HCT116 (cell line): ENCODE measurements at regions of chr5 and their contacts with region 1.

Region 1: DNA sequence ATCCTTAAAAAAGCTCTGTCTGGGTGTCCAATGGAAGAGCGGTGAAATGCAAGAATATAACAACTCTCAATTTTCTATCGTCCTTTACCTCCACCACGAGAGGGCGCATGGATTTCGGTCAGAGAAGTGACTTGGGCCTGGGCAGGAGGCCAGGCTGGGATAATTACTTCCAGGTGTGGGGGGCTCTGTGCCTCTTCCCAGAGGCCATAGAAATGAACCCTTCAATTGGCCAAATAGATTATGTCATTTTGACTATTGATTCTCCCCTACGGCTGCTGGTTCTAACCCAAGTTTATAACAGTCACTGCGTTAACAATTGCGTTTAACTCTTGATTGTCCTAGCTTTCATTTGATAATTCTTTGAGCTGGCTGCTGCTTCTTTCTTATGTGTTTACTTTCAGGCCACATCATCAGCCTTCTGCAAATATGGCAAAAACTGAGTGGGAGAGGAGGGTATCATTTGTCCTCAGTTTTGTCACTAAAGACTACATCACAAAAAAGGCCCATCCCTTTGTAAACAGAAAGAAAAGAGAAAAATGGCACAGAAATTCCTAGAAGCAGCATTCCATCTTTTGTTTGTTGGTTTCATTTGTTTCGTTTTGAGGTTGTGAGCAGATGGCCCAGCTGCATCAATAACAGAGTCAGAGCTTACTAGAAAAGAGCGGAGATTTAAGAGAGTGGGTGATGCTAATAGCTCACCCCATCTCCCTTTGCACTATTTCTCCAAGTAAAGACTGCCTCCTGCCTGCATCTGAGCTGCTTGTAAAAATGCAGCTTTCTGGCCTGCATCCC is 45.4 kb upstream of the ZFR start:
- DNase-seq: peak; percentile 65
- ATAC-seq: peak; percentile 94
- H3K4me3 ChIP-seq: no peak overlapping the region
- H3K27ac ChIP-seq: no peak overlapping the region
- H3K4me1 ChIP-seq: no peaks in the 10 kb centered on the region
- H3K27me3 ChIP-seq: no peaks in the 10 kb centered on the region
- CTCF ChIP-seq: peak; percentile 73 to 85 (median 75); a peak in 5 of 6 replicates
- POLR2A ChIP-seq: no peak
- RAD21 ChIP-seq: peak; percentile 75

Region 2: GRCh38 chr5:32589942-32590869 is 100.2 kb after region 1 on chr5:
- CTCF ChIA-PET with region 1: interaction called, 184 read pairs
- POLR2A ChIA-PET with region 1: interaction called, 5 read pairs
- RAD21 ChIA-PET with region 1: interaction called, 16 to 17 read pairs
- intact Hi-C with region 1: loop called (anchors 1 kb)
- DNase-seq: peak; percentile 31
- ATAC-seq: no peak
- H3K4me3 ChIP-seq: no peak overlapping the region
- H3K27ac ChIP-seq: no peak overlapping the region
- H3K4me1 ChIP-seq: peaks cover 3 to 8% of the 10 kb centered on the region in 2 experiments; a peak in 1 of 4 replicates
- H3K27me3 ChIP-seq: no peaks in the 10 kb centered on the region
- CTCF ChIP-seq: peak; percentile 45 to 65 (median 61); a peak in 5 of 6 replicates
- POLR2A ChIP-seq: no peak
- RAD21 ChIP-seq: peak; percentile 67

Region 3: GRCh38 chr5:32916648-32917047 is 426.7 kb after region 1 on chr5:
- CTCF ChIA-PET with region 1: interaction called, 7 read pairs
- POLR2A ChIA-PET with region 1: no interaction called
- RAD21 ChIA-PET with region 1: no interaction called
- intact Hi-C with region 1: loop called (anchors 2 kb)
- DNase-seq: peak; percentile 32
- ATAC-seq: peak; percentile 96
- H3K4me3 ChIP-seq: no peak overlapping the region
- H3K27ac ChIP-seq: no peak overlapping the region
- H3K4me1 ChIP-seq: no peaks in the 10 kb centered on the region
- H3K27me3 ChIP-seq: 0 out of 2 replicates have a peak, but pooled peaks cover 5% of the 10 kb centered on the region
- CTCF ChIP-seq: peak; percentile 61 to 72 (median 67); a peak in 5 of 6 replicates
- POLR2A ChIP-seq: no peak
- RAD21 ChIP-seq: peak; percentile 79

Region 4: DNA sequence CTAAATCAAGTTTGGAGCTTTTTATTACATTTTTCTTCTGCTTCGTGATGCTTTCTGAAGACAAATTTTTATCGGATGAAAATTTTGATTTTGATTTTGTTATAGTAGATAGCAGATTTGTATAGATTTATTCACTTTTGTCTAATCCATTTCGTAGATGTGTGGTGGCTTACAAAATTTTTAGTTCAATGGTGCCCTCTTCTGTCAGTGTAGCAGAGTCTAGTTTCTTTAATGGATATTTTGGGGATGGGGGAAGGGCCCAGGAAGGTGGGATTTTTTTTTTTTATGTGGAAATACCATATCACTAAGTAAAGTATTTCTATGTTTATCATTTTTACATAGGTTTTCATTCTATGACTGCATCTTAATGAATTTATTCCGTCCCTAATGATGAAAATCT is 690.9 kb after region 1 on chr5:
- CTCF ChIA-PET with region 1: interaction called, 7 read pairs
- POLR2A ChIA-PET with region 1: no interaction called
- RAD21 ChIA-PET with region 1: no interaction called
- intact Hi-C with region 1: loop called (anchors 5 kb)
- DNase-seq: peak; percentile 28
- ATAC-seq: no peak
- H3K4me3 ChIP-seq: no peak overlapping the region
- H3K27ac ChIP-seq: no peak overlapping the region
- H3K4me1 ChIP-seq: no peaks in the 10 kb centered on the region
- H3K27me3 ChIP-seq: no peaks in the 10 kb centered on the region
- CTCF ChIP-seq: peak; percentile 36 to 63 (median 59); a peak in 5 of 6 replicates
- POLR2A ChIP-seq: no peak
- RAD21 ChIP-seq: peak; percentile 76

Region 5: DNA sequence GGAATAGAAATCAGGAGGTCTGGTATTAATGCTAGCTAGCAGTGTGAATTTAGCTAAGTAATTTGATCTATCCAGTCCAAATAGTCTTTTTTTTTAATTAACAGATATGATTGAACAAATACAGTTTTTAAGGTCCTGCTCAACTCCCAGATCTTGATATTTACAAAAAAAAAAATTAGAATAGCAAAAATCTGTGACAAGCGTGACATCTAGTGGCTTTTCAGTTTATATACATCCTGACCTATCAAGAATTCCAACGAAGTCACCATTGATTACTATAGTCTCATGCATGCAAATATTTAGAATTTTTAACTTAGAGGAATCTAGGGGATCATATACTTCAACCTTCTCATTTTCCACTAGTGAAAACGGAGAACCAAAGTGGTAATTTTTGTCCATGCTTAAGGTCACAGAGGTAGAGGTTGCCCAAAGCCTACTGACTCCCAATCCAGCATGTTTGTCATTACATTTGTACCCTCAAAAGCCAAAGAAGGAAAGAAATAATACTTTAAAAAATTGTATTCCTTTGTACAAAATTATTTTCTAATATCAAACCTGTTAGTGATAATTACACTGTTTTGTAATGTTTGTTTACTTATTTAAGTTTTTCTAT is 933.1 kb after region 1 on chr5:
- CTCF ChIA-PET with region 1: interaction called, 5 read pairs
- POLR2A ChIA-PET with region 1: no interaction called
- RAD21 ChIA-PET with region 1: no interaction called
- intact Hi-C with region 1: loop called (anchors 10 kb)
- DNase-seq: peak; percentile 23
- ATAC-seq: peak; percentile 74
- H3K4me3 ChIP-seq: no peak overlapping the region
- H3K27ac ChIP-seq: no peak overlapping the region
- H3K4me1 ChIP-seq: no peaks in the 10 kb centered on the region
- H3K27me3 ChIP-seq: no peaks in the 10 kb centered on the region
- CTCF ChIP-seq: peak; percentile 34 to 50 (median 38); a peak in 5 of 6 replicates
- POLR2A ChIP-seq: no peak
- RAD21 ChIP-seq: peak; percentile 63